Dendritic cell treated with granulocyte-macrophage colony-stimulating factor and Interleukin-4, amounts not matched to agents 40 ng/mL and 50 ng/mL, for 4 days (primary cell): ENCODE measurements at regions of chr10 and their contacts with region 1.

Region 1: DNA sequence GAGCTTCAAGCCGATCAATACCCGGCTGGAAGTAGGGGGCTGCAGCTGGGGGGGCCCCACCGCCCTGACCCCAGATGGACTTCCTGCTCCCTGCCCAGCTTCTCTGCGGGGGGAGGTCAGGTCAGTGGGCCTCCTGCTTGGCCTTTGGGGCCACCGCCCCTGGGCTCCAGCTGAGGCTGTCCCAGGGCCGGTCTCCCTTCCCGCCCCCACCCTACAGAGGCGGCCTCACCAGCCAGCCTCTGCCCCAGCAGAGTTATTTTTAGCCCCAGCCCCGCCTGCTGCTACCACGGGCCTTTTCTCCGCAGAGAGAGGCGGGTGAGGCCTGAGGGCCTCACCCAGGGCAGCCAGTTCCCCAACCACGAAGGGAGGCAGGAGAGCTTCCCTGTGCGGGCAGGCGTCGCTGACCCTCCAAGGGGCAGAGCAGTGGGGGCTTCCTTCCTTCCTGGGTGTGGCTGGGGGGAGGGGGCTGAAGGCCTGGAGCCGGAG is 24.4 kb downstream of the PWWP2B start:
- H3K4me3 Mint-ChIP-seq: peak overlapping the region; percentile 76
- H3K27ac Mint-ChIP-seq: peak overlapping the region; percentile 96
- H3K4me1 Mint-ChIP-seq: peaks cover 63% of the 10 kb centered on the region
- H3K27me3 Mint-ChIP-seq: no peaks in the 10 kb centered on the region

Region 2: GRCh38 chr10:132387764-132388210 is 33.6 kb before region 1 on chr10:
- intact Hi-C with region 1: loop called (anchors 5 kb)
- H3K4me3 Mint-ChIP-seq: peak overlapping the region; percentile 66
- H3K27ac Mint-ChIP-seq: peak overlapping the region; percentile 88
- H3K4me1 Mint-ChIP-seq: peaks cover 49% of the 10 kb centered on the region
- H3K27me3 Mint-ChIP-seq: peaks cover 35% of the 10 kb centered on the region